Testis (tissue), 5 donors: ENCODE measurements at regions of chr1 and their contacts with region 1.

Region 1: GRCh38 chr1:25204797-25205480 is 27.4 kb downstream of the SYF2 start:
- DNase-seq: no peak
- H3K4me3 ChIP-seq: no peak overlapping the region
- H3K27ac ChIP-seq: no peak overlapping the region
- H3K4me1 ChIP-seq: no peaks in the 10 kb centered on the region
- H3K27me3 ChIP-seq: no peaks in the 10 kb centered on the region
- CTCF ChIP-seq: peak; percentile 46 to 93 (median 63)
- POLR2A ChIP-seq: no peak

Region 2: DNA sequence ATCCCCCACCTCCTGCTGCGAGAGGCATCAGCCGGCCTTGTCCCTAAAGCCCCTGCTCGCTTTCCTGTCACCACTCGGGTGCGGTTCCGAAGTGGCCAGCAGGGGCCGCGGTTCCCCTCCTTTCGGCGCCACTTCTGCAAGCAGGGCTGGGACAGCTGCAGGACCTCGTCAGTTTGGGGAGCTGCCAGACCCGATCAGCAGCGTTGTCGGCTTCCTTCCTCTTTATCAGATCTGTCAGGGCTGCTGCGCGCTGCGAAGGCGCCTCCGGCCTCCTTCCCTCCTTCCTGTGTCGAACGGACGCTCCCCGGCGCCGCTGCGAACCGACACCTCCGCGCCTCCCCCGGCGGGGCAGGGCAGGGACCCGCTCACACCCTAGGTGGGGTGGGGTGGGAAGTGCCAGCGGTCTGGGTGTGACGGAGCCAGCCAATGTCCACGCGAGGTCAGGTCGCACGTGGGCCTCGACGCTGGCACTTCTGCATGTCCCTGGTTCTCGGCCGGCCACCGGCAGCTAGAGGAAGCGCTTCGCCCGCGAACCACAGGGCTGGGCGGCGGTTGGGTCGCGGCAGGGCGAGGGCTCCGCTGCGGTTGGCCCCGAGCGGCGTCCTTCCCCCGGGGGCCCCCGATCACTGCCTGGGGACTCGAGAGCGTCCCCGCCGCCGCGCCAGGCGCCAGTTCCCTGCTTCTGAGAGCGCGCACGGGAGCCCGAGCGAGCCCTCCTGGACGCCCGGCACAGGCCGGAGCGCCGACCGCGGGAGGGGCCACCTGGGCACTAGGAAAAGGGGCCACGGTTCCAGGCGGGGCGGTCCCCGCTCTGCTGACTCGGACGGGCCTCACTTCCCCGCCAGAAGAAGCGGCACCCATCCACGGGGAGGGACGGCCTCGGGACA is 356.7 kb before region 1 on chr1:
- intact Hi-C with region 1: loop called (anchors 10 kb)
- DNase-seq: peak; percentile 94
- H3K4me3 ChIP-seq: peak overlapping the region; percentile 58 to 66
- H3K27ac ChIP-seq: peak overlapping the region in 1 of 2 donors; percentile 58
- H3K4me1 ChIP-seq: peaks cover 7% of the 10 kb centered on the region
- H3K27me3 ChIP-seq: no peaks in the 10 kb centered on the region
- CTCF ChIP-seq: peak; percentile 85 to 92 (median 90)
- POLR2A ChIP-seq: no peak

Region 3: GRCh38 chr1:25430666-25431505 is 225.9 kb after region 1 on chr1 and contains the start of gene MACO1:
- intact Hi-C with region 1: no loop called
- DNase-seq: peak; percentile 98
- H3K4me3 ChIP-seq: peak within 1 kb of the TSS; percentile 94 to 95
- H3K27ac ChIP-seq: peak within 1 kb of the TSS; percentile 90 to 92
- H3K4me1 ChIP-seq: peaks cover 15% of the 10 kb centered on the region
- H3K27me3 ChIP-seq: no peaks in the 10 kb centered on the region
- CTCF ChIP-seq: no peak
- POLR2A ChIP-seq: no peak
- total RNA-seq, gene MACO1: 22.1 to 25.4 TPM